Naive thymus-derived CD4-positive, alpha-beta T cell (primary cell): ENCODE measurements at regions of chr1 and their contacts with region 1.

Region 1: GRCh38 chr1:172398970-172399755 is 21.3 kb upstream of the C1orf105 start:
- DNase-seq: peak in 7 of 9 donors; percentile 20 to 57 (median 46)
- ATAC-seq: peak; percentile 49
- H3K4me3 ChIP-seq: peak overlapping the region; percentile 12
- H3K4me3 Mint-ChIP-seq: peak overlapping the region; percentile 43 to 79 (median 64)
- H3K27ac ChIP-seq: no peak overlapping the region
- H3K27ac Mint-ChIP-seq: peak overlapping the region; percentile 60 to 100 (median 89)
- H3K4me1 ChIP-seq: peaks cover 30 to 46% of the 10 kb centered on the region in 2 donors
- H3K4me1 Mint-ChIP-seq: peaks cover 31 to 85% (median 72%) of the 10 kb centered on the region in 7 donors
- H3K27me3 ChIP-seq: no peaks in the 10 kb centered on the region
- H3K27me3 Mint-ChIP-seq: peaks cover 0 to 2% (median 0%) of the 10 kb centered on the region in 5 donors

Region 2: DNA sequence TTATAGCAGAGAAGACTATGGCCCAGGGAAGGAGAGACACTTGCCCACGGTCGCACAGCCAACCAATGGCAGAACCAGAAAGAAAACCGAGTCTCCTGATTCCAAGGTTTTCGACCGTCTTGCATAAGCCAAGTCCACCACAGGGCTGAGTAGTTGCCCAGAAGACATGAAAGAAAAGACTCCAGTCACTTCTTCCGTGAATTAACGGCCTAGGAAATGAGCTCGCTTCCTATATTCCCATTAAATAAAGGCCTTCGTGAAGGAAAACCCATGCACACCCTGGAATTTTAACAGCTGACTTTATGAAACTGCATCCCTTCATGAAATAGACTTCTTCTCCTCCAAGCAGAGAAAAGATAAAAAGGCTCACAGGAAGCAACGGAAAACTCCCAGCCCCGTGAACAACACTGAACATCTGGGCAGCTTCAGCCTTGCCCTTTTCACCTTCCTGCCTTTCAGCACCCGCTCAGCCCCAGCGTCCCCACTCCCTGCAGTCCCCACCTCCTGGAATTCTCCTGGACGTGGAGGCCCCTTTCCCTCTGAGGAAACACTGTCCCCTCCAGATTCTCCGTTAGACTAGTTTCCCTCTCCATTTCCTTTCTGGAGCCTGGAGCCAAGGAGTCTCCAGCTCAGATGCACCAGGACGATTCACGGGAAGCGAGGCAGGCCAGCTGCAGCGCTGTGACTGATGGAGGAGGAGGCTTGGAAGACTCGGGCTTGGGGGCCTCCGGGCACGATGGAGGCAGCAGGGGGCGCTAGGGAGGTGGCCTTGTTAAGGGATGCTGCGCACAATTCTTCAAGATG is 744.0 kb before region 1 on chr1:
- CTCF ChIA-PET with region 1: no interaction called
- POLR2A ChIA-PET with region 1: no interaction called
- intact Hi-C with region 1: loop called in 1 of 2 experiments (anchors 10 kb)
- DNase-seq: peak; percentile 24 to 76 (median 38)
- ATAC-seq: peak; percentile 78
- H3K4me3 ChIP-seq: peak overlapping the region; percentile 39
- H3K4me3 Mint-ChIP-seq: peak overlapping the region in 8 of 10 donors; percentile 3 to 72 (median 52)
- H3K27ac ChIP-seq: no peak overlapping the region
- H3K27ac Mint-ChIP-seq: peak overlapping the region in 1 of 9 donors; percentile 33
- H3K4me1 ChIP-seq: peaks cover 3 to 5% of the 10 kb centered on the region in 2 donors
- H3K4me1 Mint-ChIP-seq: peaks cover 9 to 12% (median 10%) of the 10 kb centered on the region in 7 donors
- H3K27me3 ChIP-seq: no peaks in the 10 kb centered on the region
- H3K27me3 Mint-ChIP-seq: peaks cover 0 to 34% (median 11%) of the 10 kb centered on the region in 5 donors

Region 3: GRCh38 chr1:172089768-172090510 is 309.2 kb before region 1 on chr1:
- CTCF ChIA-PET with region 1: interaction called, 23 read pairs
- POLR2A ChIA-PET with region 1: interaction called, 3 read pairs
- intact Hi-C with region 1: loop called (anchors 1 kb)
- DNase-seq: peak; percentile 25 to 61 (median 46)
- ATAC-seq: peak; percentile 86
- H3K4me3 ChIP-seq: no peak overlapping the region
- H3K4me3 Mint-ChIP-seq: peak overlapping the region in 3 of 10 donors; percentile 9 to 35 (median 24)
- H3K27ac ChIP-seq: no peak overlapping the region
- H3K27ac Mint-ChIP-seq: peak overlapping the region in 4 of 9 donors; percentile 1 to 72 (median 50)
- H3K4me1 ChIP-seq: no peaks in the 10 kb centered on the region
- H3K4me1 Mint-ChIP-seq: peaks cover 0 to 7% (median 6%) of the 10 kb centered on the region in 7 donors
- H3K27me3 ChIP-seq: no peaks in the 10 kb centered on the region
- H3K27me3 Mint-ChIP-seq: peaks cover 0 to 7% (median 0%) of the 10 kb centered on the region in 5 donors

Region 4: DNA sequence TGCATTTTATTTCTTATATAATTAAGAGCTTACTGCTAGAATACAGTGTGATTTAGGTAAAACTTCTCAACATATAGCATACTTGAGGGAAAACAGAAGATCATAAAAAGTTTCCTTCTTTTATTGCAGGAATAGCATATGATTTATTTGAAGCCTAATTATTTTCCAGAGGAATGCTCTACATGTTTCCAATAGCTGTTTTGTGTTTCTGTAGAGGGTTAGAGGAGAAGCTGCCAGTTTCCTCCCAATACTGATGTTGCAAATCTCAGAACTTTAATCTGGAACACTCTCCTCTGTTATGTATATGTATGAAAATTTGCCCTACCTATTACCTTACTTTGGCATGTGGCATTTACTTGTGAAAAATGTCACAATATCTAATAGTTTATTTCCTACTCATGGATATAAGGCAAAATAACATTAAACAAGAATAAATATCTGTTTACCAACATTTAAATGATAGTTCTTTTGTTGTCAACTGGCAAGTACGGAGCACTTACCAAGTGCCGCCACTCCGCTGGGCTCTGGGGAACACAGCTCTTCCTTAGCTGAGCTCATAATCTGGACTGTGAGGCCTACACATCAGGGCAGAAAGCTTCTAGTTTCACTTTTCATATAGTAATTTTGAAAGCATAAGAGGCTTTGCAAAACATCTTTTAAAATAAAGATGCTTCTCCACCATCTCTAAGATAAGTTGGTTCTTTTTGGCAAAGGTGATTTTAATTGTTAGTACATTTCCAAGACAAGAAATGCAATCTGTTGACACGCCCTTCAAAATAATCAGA is 218.5 kb before region 1 on chr1:
- CTCF ChIA-PET with region 1: interaction called, 4 read pairs
- POLR2A ChIA-PET with region 1: interaction called, 9 read pairs
- intact Hi-C with region 1: loop called (anchors 1 kb)
- DNase-seq: peak in 8 of 9 donors; percentile 18 to 50 (median 40)
- ATAC-seq: peak; percentile 72
- H3K4me3 ChIP-seq: peak overlapping the region; percentile 56
- H3K4me3 Mint-ChIP-seq: peak overlapping the region; percentile 61 to 91 (median 82)
- H3K27ac ChIP-seq: peak overlapping the region; percentile 80
- H3K27ac Mint-ChIP-seq: peak overlapping the region; percentile 95 to 99 (median 97)
- H3K4me1 ChIP-seq: peaks cover 21 to 23% of the 10 kb centered on the region in 2 donors
- H3K4me1 Mint-ChIP-seq: peaks cover 26 to 59% (median 45%) of the 10 kb centered on the region in 7 donors
- H3K27me3 ChIP-seq: no peaks in the 10 kb centered on the region
- H3K27me3 Mint-ChIP-seq: no peaks in the 10 kb centered on the region

Region 5: GRCh38 chr1:172338295-172338735 is 60.8 kb before region 1 on chr1:
- CTCF ChIA-PET with region 1: interaction called, 4 read pairs
- POLR2A ChIA-PET with region 1: no interaction called
- intact Hi-C with region 1: loop called (anchors 1 to 2 kb)
- DNase-seq: peak in 1 of 9 donors; percentile 48
- ATAC-seq: no peak
- H3K4me3 ChIP-seq: no peak overlapping the region
- H3K4me3 Mint-ChIP-seq: peak overlapping the region in 1 of 10 donors; percentile 10
- H3K27ac ChIP-seq: no peak overlapping the region
- H3K27ac Mint-ChIP-seq: peak overlapping the region in 1 of 9 donors; percentile 42
- H3K4me1 ChIP-seq: peaks cover 0 to 4% of the 10 kb centered on the region in 2 donors
- H3K4me1 Mint-ChIP-seq: peaks cover 2 to 45% (median 7%) of the 10 kb centered on the region in 7 donors
- H3K27me3 ChIP-seq: no peaks in the 10 kb centered on the region
- H3K27me3 Mint-ChIP-seq: no peaks in the 10 kb centered on the region

Region 6: DNA sequence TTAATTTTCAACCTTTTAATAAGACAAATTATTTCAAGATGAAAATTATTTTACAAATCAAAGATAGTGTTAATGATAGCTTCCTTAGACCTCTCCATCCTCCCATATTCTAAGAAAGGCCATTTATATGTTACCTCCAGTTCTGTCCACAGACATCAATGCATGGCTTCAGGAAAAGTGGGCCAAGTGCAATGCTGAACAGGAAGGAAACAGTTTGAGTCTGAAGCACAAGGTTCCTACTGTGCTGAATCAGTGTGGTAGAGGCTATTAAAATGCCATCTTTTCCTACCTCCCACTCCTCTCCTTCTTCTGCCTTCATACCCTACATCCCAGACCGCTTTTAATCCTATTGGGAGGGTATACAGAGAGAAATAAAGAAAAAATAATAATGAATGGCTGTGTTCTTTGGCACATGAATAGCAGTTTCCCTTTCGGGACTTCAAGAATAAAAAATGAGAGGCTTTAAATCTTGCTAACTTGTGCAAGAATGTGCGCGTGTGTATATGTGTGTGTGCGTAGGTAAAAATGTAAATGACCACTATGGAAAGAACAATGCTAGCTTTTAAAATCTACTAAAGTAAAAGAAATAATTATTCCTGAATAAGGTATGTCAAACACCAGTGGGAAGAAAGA is 41.3 kb before region 1 on chr1:
- CTCF ChIA-PET with region 1: interaction called, 13 read pairs
- POLR2A ChIA-PET with region 1: interaction called, 15 read pairs
- intact Hi-C with region 1: loop called (anchors 1 kb)
- DNase-seq: no peak
- ATAC-seq: peak; percentile 24
- H3K4me3 ChIP-seq: no peak overlapping the region
- H3K4me3 Mint-ChIP-seq: peak overlapping the region; percentile 60 to 76 (median 72)
- H3K27ac ChIP-seq: peak overlapping the region; percentile 58
- H3K27ac Mint-ChIP-seq: peak overlapping the region; percentile 67 to 93 (median 90)
- H3K4me1 ChIP-seq: peaks cover 25 to 40% of the 10 kb centered on the region in 2 donors
- H3K4me1 Mint-ChIP-seq: peaks cover 8 to 56% (median 34%) of the 10 kb centered on the region in 7 donors
- H3K27me3 ChIP-seq: no peaks in the 10 kb centered on the region
- H3K27me3 Mint-ChIP-seq: no peaks in the 10 kb centered on the region

Region 7: DNA sequence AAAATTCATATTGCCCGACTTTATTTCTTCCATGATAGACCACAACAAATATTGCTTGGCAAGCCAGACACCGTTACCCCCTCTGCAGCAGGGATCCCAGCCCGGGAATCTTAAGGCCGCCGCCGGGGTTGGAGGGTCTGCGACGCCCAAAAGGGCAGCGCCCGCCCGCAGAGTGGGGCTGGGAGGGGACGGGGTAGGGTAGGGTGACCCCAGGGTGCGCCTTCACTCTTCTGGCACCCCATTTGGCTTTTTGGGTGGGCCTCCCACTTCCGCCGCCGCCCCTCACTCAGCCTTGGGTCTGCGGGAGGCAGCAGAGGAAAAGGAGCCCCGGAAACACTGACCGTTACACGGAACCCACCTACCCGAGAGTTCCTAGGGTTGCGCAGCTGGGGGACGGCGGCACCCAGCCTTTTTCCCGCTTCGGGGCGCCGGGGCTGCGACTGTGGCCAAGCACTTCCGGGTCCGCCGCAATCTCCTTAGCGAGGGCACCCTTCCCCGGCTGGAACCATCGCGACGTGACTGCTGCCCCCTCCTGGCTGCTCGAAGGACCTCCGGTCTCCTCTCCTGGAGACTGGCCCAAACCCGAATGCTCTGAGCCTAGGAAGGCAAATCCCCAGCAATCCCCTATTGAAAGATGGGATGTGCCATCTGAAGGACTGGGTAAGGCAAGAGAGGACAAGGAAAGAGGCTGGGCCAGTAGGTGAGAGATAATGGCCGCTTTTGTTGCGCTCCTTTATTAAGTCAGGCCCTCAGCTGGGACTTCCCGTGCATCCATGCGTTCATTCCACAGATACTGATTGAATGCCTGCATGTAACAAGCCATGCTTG is 44.7 kb after region 1 on chr1 and contains the start of gene PIGC:
- CTCF ChIA-PET with region 1: interaction called, 4 read pairs
- POLR2A ChIA-PET with region 1: interaction called, 4 read pairs
- intact Hi-C with region 1: loop called in 1 of 2 experiments (anchors 1 kb)
- DNase-seq: peak; percentile 78 to 89 (median 87)
- ATAC-seq: peak; percentile 100
- H3K4me3 ChIP-seq: peak within 1 kb of the TSS; percentile 72
- H3K4me3 Mint-ChIP-seq: peak within 1 kb of the TSS; percentile 87 to 98 (median 94)
- H3K27ac ChIP-seq: peak within 1 kb of the TSS; percentile 83
- H3K27ac Mint-ChIP-seq: peak within 1 kb of the TSS; percentile 91 to 97 (median 93)
- H3K4me1 ChIP-seq: peaks cover 15 to 25% of the 10 kb centered on the region in 2 donors
- H3K4me1 Mint-ChIP-seq: peaks cover 27 to 53% (median 47%) of the 10 kb centered on the region in 7 donors
- H3K27me3 ChIP-seq: no peaks in the 10 kb centered on the region
- H3K27me3 Mint-ChIP-seq: no peaks in the 10 kb centered on the region
- total RNA-seq, gene PIGC: 21.1 to 57.4 (median 25.1) TPM

Region 8: GRCh38 chr1:172609528-172609927 is 210.4 kb after region 1 on chr1:
- CTCF ChIA-PET with region 1: no interaction called
- POLR2A ChIA-PET with region 1: no interaction called
- intact Hi-C with region 1: no loop called
- DNase-seq: peak in 6 of 9 donors; percentile 21 to 53 (median 38)
- ATAC-seq: peak; percentile 75
- H3K4me3 ChIP-seq: no peak overlapping the region
- H3K4me3 Mint-ChIP-seq: no peak overlapping the region
- H3K27ac ChIP-seq: no peak overlapping the region
- H3K27ac Mint-ChIP-seq: peak overlapping the region in 3 of 9 donors; percentile 1 to 25 (median 7)
- H3K4me1 ChIP-seq: no peaks in the 10 kb centered on the region
- H3K4me1 Mint-ChIP-seq: peaks cover 0 to 15% (median 6%) of the 10 kb centered on the region in 7 donors
- H3K27me3 ChIP-seq: no peaks in the 10 kb centered on the region
- H3K27me3 Mint-ChIP-seq: no peaks in the 10 kb centered on the region